Adrenal gland (tissue), 19 donors: ENCODE measurements at regions of chr16 and their contacts with region 1.

Region 1: DNA sequence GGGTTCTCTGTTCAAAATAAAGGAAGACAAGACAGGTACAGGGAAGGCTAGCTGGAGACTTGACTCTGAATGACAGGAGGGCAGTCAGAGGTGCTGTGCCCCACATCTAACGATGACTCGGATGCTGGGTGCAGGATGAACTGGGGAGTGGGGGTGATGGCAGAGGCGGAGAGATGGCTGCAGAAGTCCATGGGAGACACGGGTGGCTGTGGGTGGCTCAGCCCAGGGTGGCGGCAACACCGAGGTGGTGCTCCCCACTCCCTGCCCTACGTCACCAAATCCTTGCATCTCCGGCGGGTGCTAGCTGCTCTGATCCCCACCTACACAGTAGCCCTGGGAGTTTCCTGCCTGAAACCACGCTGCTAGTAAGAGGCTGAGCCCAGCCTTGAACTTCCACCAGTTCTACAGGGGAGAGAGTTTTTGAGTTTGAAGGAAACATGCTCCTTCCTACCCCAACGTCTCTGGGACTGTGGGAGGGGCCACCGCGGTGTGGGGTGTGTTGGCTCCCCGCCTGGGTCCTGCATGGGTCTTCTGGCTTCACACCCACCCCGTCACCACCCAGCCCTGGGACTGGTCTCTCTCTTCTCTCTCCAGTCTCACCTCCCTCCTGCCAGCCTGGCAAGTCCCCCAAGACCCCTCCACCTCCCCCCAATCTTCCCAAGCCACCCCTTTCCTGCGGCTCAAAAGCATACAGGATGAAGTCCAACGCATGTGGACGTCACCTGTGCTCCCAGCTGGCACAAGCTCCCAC is 4.5 kb downstream of the GSG1L start:
- DNase-seq: no peak
- H3K4me3 ChIP-seq: no peak overlapping the region
- H3K27ac ChIP-seq: no peak overlapping the region
- H3K4me1 ChIP-seq: no peaks in the 10 kb centered on the region
- H3K27me3 ChIP-seq: peaks cover 24% of the 10 kb centered on the region
- CTCF ChIP-seq: no peak
- POLR2A ChIP-seq: no peak

Region 2: DNA sequence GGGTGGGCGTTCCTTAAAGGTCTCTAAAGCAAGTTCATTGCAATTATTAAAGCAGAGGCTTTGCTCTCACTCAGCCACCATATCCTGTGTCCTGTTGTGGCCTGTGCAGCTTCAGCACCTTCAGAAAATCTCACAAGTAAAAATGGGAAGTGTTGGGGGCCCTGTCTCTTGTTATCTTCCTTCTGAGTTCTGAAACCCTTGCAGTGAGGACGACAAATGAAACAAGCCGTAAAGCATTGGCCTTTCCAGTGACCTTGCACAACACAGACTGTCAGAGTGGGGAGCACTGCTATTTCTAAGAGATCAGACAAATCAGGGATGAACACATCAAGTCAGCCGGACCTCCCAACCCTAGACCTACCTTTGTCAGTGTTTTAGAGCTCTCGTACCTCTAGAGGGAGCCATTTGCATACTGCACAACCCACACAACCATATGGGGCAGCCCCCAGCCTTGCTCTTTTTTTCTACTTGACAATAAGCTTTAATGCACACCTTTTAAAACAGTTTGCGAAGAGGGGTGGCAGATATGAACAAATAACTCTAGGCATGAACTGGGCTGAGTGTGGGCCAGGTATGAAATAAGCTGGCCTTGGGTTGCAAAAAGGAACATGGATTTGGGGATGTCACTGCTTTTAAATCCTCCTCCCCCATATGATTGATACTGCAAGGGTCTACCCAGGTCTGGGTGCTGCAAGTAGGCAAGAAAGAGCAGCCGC is 419.3 kb before region 1 on chr16:
- intact Hi-C with region 1: loop called in 1 of 2 experiments (anchors 10 kb)
- DNase-seq: peak in 3 of 7 donors; percentile 21 to 56 (median 26)
- H3K4me3 ChIP-seq: no peak overlapping the region
- H3K27ac ChIP-seq: no peak overlapping the region
- H3K4me1 ChIP-seq: no peaks in the 10 kb centered on the region
- H3K27me3 ChIP-seq: no peaks in the 10 kb centered on the region
- CTCF ChIP-seq: peak; percentile 21 to 53 (median 31)
- POLR2A ChIP-seq: no peak

Region 3: DNA sequence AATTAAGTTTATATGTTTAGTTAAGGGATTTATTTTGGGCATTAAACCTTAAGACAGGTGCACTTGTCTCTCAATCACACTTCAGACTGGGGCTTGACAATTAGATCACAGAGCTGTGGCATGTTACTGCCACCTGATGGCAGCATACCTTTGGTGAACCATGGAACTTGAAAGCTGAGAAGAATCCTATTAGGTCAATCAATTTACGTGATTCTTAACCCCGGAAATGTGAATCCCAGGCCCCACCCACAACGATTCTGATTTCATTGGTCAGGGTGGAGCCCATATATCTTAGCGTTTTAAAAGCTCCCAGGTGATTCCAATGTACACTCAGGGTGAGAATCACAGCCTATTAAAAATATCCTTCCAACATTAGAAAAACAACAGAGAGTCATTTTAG is 86.5 kb before region 1 on chr16:
- intact Hi-C with region 1: loop called in 1 of 2 experiments (anchors 10 kb)
- DNase-seq: peak in 3 of 7 donors; percentile 8 to 52 (median 21)
- H3K4me3 ChIP-seq: no peak overlapping the region
- H3K27ac ChIP-seq: no peak overlapping the region
- H3K4me1 ChIP-seq: no peaks in the 10 kb centered on the region
- H3K27me3 ChIP-seq: no peaks in the 10 kb centered on the region
- CTCF ChIP-seq: peak in 5 of 6 experiments; percentile 18 to 47 (median 28)
- POLR2A ChIP-seq: no peak